Panc1 (cell line): ENCODE measurements at regions of chr15 and their contacts with region 1.

Region 1: GRCh38 chr15:25362545-25362944 is 76.3 kb downstream of the UBE3A start:
- DNase-seq: no peak
- ATAC-seq: no peak
- H3K4me3 ChIP-seq: no peak overlapping the region
- H3K27ac ChIP-seq: no peak overlapping the region
- H3K4me1 ChIP-seq: no peaks in the 10 kb centered on the region
- H3K27me3 ChIP-seq: no peaks in the 10 kb centered on the region
- CTCF ChIP-seq: no peak

Region 2: GRCh38 chr15:25327686-25328085 is 34.9 kb before region 1 on chr15:
- CTCF ChIA-PET with region 1: no interaction called
- POLR2A ChIA-PET with region 1: interaction called, 10 read pairs
- in situ Hi-C with region 1: no loop called
- intact Hi-C with region 1: no loop called
- DNase-seq: no peak
- ATAC-seq: no peak
- H3K4me3 ChIP-seq: no peak overlapping the region
- H3K27ac ChIP-seq: no peak overlapping the region
- H3K4me1 ChIP-seq: no peaks in the 10 kb centered on the region
- H3K27me3 ChIP-seq: no peaks in the 10 kb centered on the region
- CTCF ChIP-seq: no peak